Panc1 (cell line): ENCODE measurements at regions of chr5 and their contacts with region 1.

Region 1: DNA sequence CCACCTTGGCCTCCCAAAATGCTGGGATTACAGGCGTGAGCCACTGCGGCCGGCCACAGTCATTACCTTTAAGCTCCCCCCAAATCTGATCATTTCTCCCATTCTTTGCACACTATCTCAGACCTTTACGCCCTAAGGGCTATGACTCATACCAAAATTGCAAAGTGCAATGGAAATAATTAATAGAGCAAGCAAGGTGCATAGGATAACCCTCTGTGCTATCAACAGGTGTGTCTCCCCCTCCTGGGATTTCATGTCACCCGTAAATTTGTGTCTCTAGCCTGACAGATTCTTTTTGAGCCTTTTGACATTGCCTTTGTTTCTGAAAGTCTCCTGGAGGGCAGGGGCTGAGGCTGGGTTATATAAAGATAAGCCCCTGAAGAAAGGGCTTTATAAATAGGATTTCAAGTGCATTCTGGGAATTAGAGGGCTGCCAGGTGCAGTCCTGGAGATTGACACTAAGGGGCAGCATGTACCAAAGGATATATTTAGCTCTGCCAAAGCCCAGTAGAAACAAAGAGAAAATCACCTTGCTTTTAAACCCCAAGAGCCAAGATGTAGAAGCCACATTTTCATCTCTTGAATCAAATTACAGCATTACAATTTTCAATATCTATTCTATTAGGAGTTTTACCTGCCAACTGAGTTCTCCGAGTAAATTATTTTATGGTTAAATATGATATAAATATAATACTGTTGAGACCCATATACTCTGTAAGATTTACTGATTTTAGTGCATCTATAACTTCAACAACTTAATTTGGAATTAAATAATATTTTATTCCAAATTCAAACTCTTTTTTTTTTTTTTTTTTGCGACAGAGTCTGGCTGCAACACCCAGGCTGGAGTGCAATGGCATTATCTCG is 18.2 kb downstream of the S100Z start:
- DNase-seq: peak; percentile 75
- ATAC-seq: peak; percentile 83
- H3K4me3 ChIP-seq: no peak overlapping the region
- H3K27ac ChIP-seq: no peak overlapping the region
- H3K4me1 ChIP-seq: peaks cover 3% of the 10 kb centered on the region; the same call in 1 of the 2 replicates
- H3K27me3 ChIP-seq: no peaks in the 10 kb centered on the region
- CTCF ChIP-seq: peak; percentile 88

Region 2: GRCh38 chr5:76601470-76601869 is 266.6 kb before region 1 on chr5:
- CTCF ChIA-PET with region 1: no interaction called
- POLR2A ChIA-PET with region 1: no interaction called
- in situ Hi-C with region 1: no loop called
- intact Hi-C with region 1: no loop called
- DNase-seq: no peak
- ATAC-seq: peak; percentile 84
- H3K4me3 ChIP-seq: no peak overlapping the region
- H3K27ac ChIP-seq: no peak overlapping the region
- H3K4me1 ChIP-seq: no peaks in the 10 kb centered on the region
- H3K27me3 ChIP-seq: no peaks in the 10 kb centered on the region
- CTCF ChIP-seq: peak; percentile 72

Region 3: DNA sequence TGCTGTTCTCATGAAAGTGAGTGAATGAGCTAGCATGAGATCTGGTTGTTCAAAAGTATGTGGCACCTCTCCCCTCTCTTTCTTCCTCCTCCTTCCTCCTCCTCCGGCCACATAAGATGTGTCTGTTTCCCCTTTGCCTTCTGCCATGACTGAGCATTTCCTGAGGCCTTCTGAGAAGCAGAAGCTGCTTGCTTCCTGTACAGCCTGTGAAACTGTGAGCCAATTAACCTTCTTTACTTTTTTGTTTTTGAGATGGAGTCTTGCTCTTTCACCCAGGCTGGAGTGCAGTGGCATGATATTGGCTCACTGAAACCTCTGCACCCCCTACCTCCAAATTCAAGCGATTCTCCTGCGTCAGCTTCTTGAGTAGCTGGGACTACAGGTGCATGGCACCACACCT is 12.1 kb before region 1 on chr5:
- CTCF ChIA-PET with region 1: interaction called, 10 read pairs
- POLR2A ChIA-PET with region 1: no interaction called
- in situ Hi-C with region 1: no loop called
- intact Hi-C with region 1: no loop called
- DNase-seq: no peak
- ATAC-seq: no peak
- H3K4me3 ChIP-seq: no peak overlapping the region
- H3K27ac ChIP-seq: no peak overlapping the region
- H3K4me1 ChIP-seq: no peaks in the 10 kb centered on the region
- H3K27me3 ChIP-seq: no peaks in the 10 kb centered on the region
- CTCF ChIP-seq: no peak

Region 4: DNA sequence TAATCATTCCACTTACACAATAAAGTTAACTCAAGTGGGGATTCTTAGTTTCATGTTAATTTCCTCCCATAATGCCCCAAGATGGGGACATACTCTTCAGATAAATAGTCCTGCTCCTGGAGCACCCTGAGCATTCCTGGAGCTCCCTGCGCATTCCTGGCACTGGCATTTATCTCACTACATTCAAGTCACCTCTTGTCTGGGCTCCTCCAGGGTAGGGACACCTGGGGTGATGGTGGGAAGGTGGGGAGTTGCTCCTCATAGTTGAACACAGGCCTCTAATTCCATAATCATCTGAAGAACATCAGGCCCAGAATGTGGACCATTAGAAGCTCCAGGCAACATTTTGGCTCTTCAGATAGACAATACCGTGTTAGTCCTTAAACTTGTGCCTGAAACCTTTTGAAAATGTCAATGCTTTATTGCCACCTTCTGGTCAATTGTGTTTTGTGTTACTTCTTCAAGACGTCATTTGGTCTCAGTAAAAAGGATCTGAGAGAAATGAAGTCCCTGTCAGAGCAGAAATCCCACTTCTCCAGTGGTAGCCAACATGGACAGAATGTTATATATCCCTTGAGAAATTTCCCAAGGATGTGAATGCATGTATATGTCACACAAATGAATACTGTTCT is 148.0 kb after region 1 on chr5:
- CTCF ChIA-PET with region 1: interaction called, 6 read pairs
- POLR2A ChIA-PET with region 1: no interaction called
- in situ Hi-C with region 1: no loop called
- intact Hi-C with region 1: loop called (anchors 2 kb)
- DNase-seq: peak; percentile 39
- ATAC-seq: peak; percentile 90
- H3K4me3 ChIP-seq: no peak overlapping the region
- H3K27ac ChIP-seq: no peak overlapping the region
- H3K4me1 ChIP-seq: no peaks in the 10 kb centered on the region
- H3K27me3 ChIP-seq: 0 out of 2 replicates have a peak, but pooled peaks cover 2% of the 10 kb centered on the region
- CTCF ChIP-seq: peak; percentile 50

Region 5: DNA sequence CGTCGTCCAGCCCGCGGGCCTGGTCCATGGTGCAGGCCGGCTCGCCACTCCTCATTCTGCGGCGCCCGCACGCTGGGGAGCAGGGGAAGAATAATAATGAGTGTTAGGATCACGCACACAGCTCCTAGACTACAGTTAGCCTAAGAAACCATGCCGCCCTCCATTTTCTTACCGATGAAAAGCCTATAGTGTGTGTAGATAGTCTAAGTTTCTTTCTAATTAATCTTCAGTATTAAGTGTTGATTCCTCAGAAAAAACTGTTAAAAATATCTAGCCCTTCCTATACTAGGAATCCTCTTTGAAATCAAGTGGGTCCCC is 209.7 kb after region 1 on chr5:
- CTCF ChIA-PET with region 1: no interaction called
- POLR2A ChIA-PET with region 1: no interaction called
- in situ Hi-C with region 1: no loop called
- intact Hi-C with region 1: loop called (anchors 2 kb)
- DNase-seq: no peak
- ATAC-seq: no peak
- H3K4me3 ChIP-seq: peak overlapping the region in 1 of 2 experiments; percentile 36; a peak in 2 of 4 replicates
- H3K27ac ChIP-seq: peak overlapping the region; percentile 36; the same call in 1 of the 2 replicates
- H3K4me1 ChIP-seq: no peaks in the 10 kb centered on the region; the same call in 1 of the 2 replicates
- H3K27me3 ChIP-seq: no peaks in the 10 kb centered on the region
- CTCF ChIP-seq: peak; percentile 21

Region 6: DNA sequence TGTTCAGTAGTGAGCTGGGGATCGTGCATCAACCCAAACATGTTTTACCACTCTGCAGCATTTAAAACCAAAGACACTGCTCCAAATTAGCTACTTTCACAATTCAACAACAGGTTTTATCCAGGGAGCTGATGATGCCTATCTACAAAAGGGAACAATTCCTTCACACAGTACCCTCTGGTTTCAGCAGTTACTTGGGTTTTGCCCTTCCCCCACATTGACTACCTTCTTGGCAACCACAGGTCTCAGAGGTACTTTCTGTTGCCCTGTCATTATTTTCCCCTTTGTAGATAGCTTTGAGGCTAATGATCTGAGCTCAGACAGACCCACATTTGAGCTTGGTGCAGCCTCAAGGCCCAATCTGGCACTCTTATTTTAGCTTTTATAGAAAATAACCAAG is 528.0 kb after region 1 on chr5:
- CTCF ChIA-PET with region 1: interaction called, 13 read pairs
- POLR2A ChIA-PET with region 1: no interaction called
- in situ Hi-C with region 1: no loop called
- intact Hi-C with region 1: no loop called
- DNase-seq: no peak
- ATAC-seq: no peak
- H3K4me3 ChIP-seq: no peak overlapping the region
- H3K27ac ChIP-seq: no peak overlapping the region
- H3K4me1 ChIP-seq: no peaks in the 10 kb centered on the region
- H3K27me3 ChIP-seq: peaks cover 4% of the 10 kb centered on the region
- CTCF ChIP-seq: no peak